ENCODE measurements at regions of chr2 and their contacts with region 1.

Region 1: GRCh38 chr2:101113396-101114267 is 37.5 kb downstream of the TBC1D8 start:
- DNase-seq: no peak
- ATAC-seq: no peak
- H3K4me3 ChIP-seq: no peak overlapping the region
- H3K27ac ChIP-seq: peak overlapping the region; percentile 77 to 95 (median 87)
- H3K4me1 ChIP-seq: peaks cover 7 to 93% (median 73%) of the 10 kb centered on the region in 12 donors
- H3K27me3 ChIP-seq: no peaks in the 10 kb centered on the region
- CTCF ChIP-seq: no peak
- POLR2A ChIP-seq: no peak

Region 2: GRCh38 chr2:100692381-100692780 is 421.3 kb before region 1 on chr2:
- intact Hi-C with region 1: no loop called
- DNase-seq: no peak
- ATAC-seq: no peak
- H3K4me3 ChIP-seq: no peak overlapping the region
- H3K27ac ChIP-seq: no peak overlapping the region
- H3K4me1 ChIP-seq: no peaks in the 10 kb centered on the region
- H3K27me3 ChIP-seq: no peaks in the 10 kb centered on the region
- CTCF ChIP-seq: no peak
- POLR2A ChIP-seq: no peak

Region 3: DNA sequence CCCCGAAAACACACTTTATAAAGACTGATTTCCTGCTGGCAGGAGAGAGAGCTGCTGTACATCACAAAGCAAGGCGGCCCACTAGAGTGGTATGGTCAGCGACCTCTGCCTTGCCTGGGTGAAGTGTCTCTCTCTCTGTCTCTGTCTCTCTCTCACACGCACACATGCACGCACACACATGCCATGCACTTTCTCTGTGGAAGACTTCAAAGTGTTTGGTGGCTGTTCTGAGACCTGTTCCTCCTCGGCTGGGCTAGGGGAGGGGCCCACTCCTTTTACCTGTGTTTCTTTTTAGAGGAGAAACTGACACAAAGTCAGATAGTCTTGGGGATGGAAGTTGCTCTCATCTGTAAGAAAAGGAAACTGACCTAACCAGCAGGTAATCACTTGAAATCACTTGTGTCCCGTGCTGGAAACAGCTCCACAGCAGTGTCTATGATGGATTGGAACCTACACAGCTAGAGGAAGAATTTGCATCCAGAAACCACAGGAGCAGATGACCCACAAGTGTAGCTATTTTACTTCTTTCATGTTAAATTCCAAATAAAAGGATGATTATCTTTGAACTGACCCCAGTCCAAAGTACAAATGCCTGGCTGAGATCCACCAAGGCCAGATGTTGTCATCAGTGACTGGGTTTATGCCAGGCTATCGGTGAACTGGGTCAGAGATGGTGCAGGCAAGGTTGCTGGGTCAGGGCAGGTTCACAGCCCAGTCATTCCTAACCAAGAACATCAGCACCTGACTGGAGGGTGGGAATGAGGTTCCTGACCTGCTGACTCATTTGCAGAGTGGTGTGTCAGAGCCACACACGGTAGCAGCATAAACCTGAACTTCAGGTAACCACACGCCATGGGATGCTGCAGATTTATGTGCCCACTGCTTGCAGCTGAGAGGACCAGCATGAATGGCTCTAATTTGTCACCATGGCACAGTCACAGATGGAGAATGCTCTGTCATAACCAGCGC is 230.7 kb before region 1 on chr2:
- intact Hi-C with region 1: no loop called
- DNase-seq: no peak
- ATAC-seq: peak in 1 of 4 donors; percentile 13
- H3K4me3 ChIP-seq: no peak overlapping the region
- H3K27ac ChIP-seq: no peak overlapping the region
- H3K4me1 ChIP-seq: peaks cover 0 to 71% (median 28%) of the 10 kb centered on the region in 12 donors
- H3K27me3 ChIP-seq: no peaks in the 10 kb centered on the region
- CTCF ChIP-seq: no peak
- POLR2A ChIP-seq: no peak

Region 4: DNA sequence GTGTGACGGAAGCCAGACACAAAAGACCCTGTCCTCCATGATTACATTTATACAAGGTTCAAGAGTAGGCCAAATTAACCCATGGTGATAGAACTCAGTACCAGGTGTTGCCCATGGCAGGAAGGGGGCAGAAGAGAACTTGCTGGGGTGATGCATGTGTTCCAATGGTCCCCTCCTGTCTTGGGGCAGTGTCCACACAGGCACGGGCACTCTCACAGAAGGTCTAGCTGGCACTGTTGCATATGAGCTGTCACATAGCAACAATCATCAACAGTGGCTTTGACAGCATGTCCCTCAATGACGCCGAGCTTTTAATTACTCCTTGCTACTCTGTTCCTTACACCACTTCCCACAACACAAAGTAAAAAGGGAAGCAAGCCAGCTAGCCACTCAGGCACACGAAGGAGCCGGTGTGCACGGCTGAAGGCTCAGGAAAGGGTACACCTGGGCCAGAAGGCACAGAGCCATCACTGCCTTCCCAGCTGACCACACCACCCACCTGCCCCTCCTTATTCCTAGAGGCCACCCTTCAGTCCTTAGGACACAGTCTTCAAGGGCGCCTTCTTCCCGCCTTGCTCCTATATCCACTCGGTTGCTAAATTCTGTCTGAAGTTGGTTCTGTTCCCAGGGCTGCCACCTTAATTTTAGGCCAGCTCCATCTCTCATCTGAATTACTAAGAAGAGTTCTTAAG is 82.6 kb before region 1 on chr2:
- intact Hi-C with region 1: no loop called
- DNase-seq: peak in 3 of 5 donors; percentile 32 to 71 (median 39)
- ATAC-seq: peak; percentile 87 to 95 (median 92)
- H3K4me3 ChIP-seq: no peak overlapping the region
- H3K27ac ChIP-seq: peak overlapping the region in 7 of 12 donors; percentile 9 to 73 (median 37)
- H3K4me1 ChIP-seq: peaks cover 0 to 19% (median 0%) of the 10 kb centered on the region in 12 donors
- H3K27me3 ChIP-seq: no peaks in the 10 kb centered on the region
- CTCF ChIP-seq: peak in 8 of 12 donors; percentile 8 to 45 (median 16)
- POLR2A ChIP-seq: no peak

Region 5: DNA sequence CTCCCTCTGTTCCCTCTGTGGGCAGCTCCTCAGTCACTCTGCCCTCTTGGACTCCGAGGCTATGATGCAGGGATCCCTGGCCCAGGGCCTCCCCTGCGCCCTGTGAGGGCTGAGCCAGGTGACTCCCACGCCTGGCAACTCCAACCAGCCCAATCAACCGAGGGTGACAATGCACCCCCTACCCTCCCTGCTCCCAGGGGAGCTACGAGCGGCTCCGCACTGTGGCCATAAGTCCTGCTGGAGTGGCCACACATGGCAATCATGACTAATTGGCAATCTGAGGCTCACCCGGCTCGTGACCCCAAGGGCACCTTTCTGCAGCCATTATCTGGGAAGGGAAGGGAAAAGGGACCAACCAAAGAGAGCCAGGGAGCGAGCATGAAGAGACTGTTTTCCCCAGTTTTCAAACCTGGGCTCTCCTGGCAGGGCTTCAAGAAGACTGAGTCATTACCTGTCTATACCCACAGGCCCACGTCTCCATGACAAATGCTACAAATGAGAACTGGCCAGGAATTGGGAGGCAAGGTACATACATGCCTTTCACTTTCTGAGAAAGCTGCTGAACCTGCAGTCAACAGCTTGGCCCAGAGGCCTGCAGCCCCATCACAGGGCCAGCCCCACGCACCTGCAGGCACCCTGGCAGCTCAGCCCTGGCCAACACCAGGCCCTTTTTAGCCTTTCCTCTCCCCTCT is 66.4 kb before region 1 on chr2:
- intact Hi-C with region 1: loop called in 1 of 10 experiments (anchors 10 kb)
- DNase-seq: no peak
- ATAC-seq: peak in 3 of 4 donors; percentile 27 to 40 (median 39)
- H3K4me3 ChIP-seq: no peak overlapping the region
- H3K27ac ChIP-seq: peak overlapping the region in 7 of 12 donors; percentile 15 to 49 (median 37)
- H3K4me1 ChIP-seq: peaks cover 0 to 28% (median 13%) of the 10 kb centered on the region in 12 donors
- H3K27me3 ChIP-seq: no peaks in the 10 kb centered on the region
- CTCF ChIP-seq: no peak
- POLR2A ChIP-seq: no peak

Region 6: DNA sequence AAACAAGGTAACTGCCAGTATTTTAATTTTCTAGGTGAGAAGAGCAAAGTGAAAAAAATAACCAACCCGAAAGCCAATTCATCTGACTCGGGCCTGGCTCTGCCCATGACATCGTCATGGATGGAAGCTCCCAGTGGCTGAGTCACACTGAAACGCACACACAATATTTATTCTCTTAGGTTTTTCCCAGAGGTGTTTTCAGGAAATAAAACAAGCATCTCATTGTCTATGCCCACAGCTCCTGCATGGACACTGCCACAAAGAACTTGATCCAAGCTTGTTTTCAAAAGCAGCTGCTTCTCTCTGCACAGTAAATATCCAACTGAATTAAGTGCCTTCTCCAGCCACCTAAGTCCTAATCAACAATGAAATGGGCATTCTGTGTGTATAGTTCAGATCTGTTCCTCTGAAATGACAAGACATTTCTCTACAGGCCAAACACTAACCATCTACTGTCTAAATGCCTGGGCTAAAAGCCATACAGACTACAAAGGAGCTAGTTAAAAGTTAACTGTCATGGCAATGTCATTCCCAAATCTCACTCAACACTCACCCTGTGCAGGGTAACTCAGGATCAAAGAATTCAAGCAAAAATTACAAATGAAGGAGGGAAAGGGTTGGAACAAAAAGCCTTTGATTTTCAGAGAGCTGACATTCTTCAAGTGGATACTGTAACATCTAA is 48.6 kb before region 1 on chr2:
- intact Hi-C with region 1: loop called in 5 of 10 experiments (anchors 5 kb)
- DNase-seq: no peak
- ATAC-seq: peak in 3 of 4 donors; percentile 38 to 60 (median 40)
- H3K4me3 ChIP-seq: no peak overlapping the region
- H3K27ac ChIP-seq: peak overlapping the region in 8 of 12 donors; percentile 0 to 59 (median 46)
- H3K4me1 ChIP-seq: peaks cover 0 to 60% (median 31%) of the 10 kb centered on the region in 12 donors
- H3K27me3 ChIP-seq: no peaks in the 10 kb centered on the region
- CTCF ChIP-seq: no peak
- POLR2A ChIP-seq: no peak

Measured in heart left ventricle (tissue), 16 donors.